ENCODE measurements at regions of chrX and their contacts with region 1.

Region 1: GRCh38 chrX:54999717-55000598 is at the start of gene APEX2:
- DNase-seq: peak; percentile 66 to 89 (median 85)
- ATAC-seq: peak; percentile 97
- H3K4me3 ChIP-seq: peak within 1 kb of the TSS; percentile 95
- H3K4me3 Mint-ChIP-seq: peak within 1 kb of the TSS; percentile 90 to 97 (median 94)
- H3K27ac ChIP-seq: peak within 1 kb of the TSS; percentile 90
- H3K27ac Mint-ChIP-seq: peak within 1 kb of the TSS; percentile 94 to 99 (median 96)
- H3K4me1 ChIP-seq: peaks cover 9 to 17% of the 10 kb centered on the region in 2 donors
- H3K4me1 Mint-ChIP-seq: peaks cover 8 to 35% (median 26%) of the 10 kb centered on the region in 7 donors
- H3K27me3 ChIP-seq: no peaks in the 10 kb centered on the region
- H3K27me3 Mint-ChIP-seq: no peaks in the 10 kb centered on the region
- total RNA-seq, gene APEX2: 6.5 to 24.6 (median 12.2) TPM

Region 2: DNA sequence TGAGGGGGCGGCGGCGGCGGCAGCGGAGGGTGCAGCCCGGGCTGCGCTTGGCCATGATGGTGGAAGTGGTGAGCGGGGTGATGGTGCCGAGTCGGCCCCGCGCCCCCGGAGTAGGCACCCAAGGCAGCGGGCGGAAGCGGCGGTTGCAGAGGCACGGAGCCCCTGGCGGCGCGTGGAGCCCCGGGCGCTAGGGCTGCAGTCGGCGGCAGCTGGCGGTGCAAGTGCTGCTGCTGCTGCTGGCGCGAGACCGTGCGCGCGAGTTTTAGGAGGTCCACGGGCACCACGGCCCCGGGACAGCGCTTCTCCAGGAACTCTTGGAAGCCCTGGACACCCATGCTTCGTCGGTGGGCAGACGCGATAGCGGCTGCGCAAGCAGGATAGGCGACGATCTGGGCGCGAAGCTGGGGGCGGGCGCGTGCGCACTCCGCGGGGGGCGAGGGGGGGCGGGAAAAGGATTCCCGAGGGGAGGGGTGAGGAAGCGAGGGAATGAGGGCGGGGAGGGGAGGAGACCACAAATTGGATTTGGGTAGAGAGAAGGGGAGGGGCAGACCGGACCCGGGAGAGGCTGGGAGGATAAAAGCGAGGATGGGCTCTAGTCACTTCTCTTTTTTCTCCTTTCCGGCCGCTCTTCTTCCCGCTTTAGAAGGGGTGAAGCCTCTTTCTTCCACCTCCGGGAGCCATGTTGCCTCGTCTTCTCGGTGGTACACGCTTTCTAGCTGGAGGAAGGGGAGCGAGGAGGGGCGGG is 816.9 kb before region 1 on chrX and contains the start of gene FAM120C:
- CTCF ChIA-PET with region 1: no interaction called
- POLR2A ChIA-PET with region 1: no interaction called
- intact Hi-C with region 1: loop called (anchors 1 kb)
- DNase-seq: peak; percentile 23 to 70 (median 65)
- ATAC-seq: peak; percentile 79
- H3K4me3 ChIP-seq: peak within 1 kb of the TSS; percentile 62
- H3K4me3 Mint-ChIP-seq: peak within 1 kb of the TSS; percentile 70 to 92 (median 88)
- H3K27ac ChIP-seq: peak within 1 kb of the TSS; percentile 78
- H3K27ac Mint-ChIP-seq: peak within 1 kb of the TSS; percentile 81 to 91 (median 88)
- H3K4me1 ChIP-seq: peaks cover 22 to 27% of the 10 kb centered on the region in 2 donors
- H3K4me1 Mint-ChIP-seq: peaks cover 30 to 42% (median 39%) of the 10 kb centered on the region in 7 donors
- H3K27me3 ChIP-seq: no peaks in the 10 kb centered on the region
- H3K27me3 Mint-ChIP-seq: no peaks in the 10 kb centered on the region
- total RNA-seq, gene FAM120C: 13.5 to 24.7 (median 17.6) TPM

Region 3: GRCh38 chrX:54529552-54530357 is 470.2 kb before region 1 on chrX and contains the start of gene GNL3L:
- CTCF ChIA-PET with region 1: no interaction called
- POLR2A ChIA-PET with region 1: no interaction called
- intact Hi-C with region 1: loop called (anchors 1 kb)
- DNase-seq: peak; percentile 58 to 84 (median 76)
- ATAC-seq: peak; percentile 93
- H3K4me3 ChIP-seq: peak within 1 kb of the TSS; percentile 82
- H3K4me3 Mint-ChIP-seq: peak within 1 kb of the TSS; percentile 87 to 97 (median 94)
- H3K27ac ChIP-seq: peak within 1 kb of the TSS; percentile 82
- H3K27ac Mint-ChIP-seq: peak within 1 kb of the TSS; percentile 87 to 99 (median 93)
- H3K4me1 ChIP-seq: peaks cover 17 to 30% of the 10 kb centered on the region in 2 donors
- H3K4me1 Mint-ChIP-seq: peaks cover 10 to 46% (median 32%) of the 10 kb centered on the region in 7 donors
- H3K27me3 ChIP-seq: no peaks in the 10 kb centered on the region
- H3K27me3 Mint-ChIP-seq: no peaks in the 10 kb centered on the region
- total RNA-seq, gene GNL3L: 32.8 to 55.4 (median 41.8) TPM

Region 4: GRCh38 chrX:54891573-54891972 is 108.4 kb before region 1 on chrX:
- CTCF ChIA-PET with region 1: interaction called, 10 read pairs
- POLR2A ChIA-PET with region 1: interaction called, 4 read pairs
- intact Hi-C with region 1: no loop called
- DNase-seq: peak in 7 of 9 donors; percentile 11 to 54 (median 40)
- ATAC-seq: peak; percentile 60
- H3K4me3 ChIP-seq: no peak overlapping the region
- H3K4me3 Mint-ChIP-seq: no peak overlapping the region
- H3K27ac ChIP-seq: no peak overlapping the region
- H3K27ac Mint-ChIP-seq: no peak overlapping the region
- H3K4me1 ChIP-seq: no peaks in the 10 kb centered on the region
- H3K4me1 Mint-ChIP-seq: peaks cover 0 to 1% (median 0%) of the 10 kb centered on the region in 7 donors
- H3K27me3 ChIP-seq: no peaks in the 10 kb centered on the region
- H3K27me3 Mint-ChIP-seq: peaks cover 0 to 9% (median 4%) of the 10 kb centered on the region in 5 donors

Region 5: DNA sequence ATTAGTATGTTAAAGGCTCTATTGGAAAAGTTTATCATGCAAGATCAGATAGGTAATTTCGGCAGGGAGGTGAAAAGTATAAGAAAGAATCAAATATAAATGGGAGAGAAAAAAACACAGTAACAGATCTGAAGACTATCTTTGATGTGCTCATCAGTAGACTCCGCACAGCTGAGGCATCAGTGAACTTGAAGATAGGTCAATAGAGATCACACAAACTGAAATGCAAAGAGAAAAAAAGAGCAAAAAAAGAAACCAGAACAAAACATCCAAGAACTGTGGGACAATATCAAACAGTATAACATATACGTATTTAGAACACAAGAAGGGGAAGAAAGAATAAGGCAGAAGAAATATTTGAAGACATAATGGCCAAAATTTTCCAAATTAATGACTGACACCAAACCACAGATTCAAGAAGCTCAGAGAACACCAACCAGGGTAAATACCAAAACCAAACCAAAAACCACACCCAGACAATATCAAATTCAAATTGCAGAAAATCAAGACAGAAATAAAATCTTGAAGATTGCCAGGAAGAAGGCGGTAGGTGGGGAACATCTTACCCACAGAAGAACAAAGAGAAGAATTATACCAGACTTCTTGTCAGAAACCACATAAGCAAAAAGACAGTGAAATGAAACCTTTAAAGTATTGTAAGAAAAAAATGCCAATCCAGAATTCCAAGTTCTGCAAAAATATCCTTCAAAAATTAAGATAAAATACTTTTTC is 35.0 kb before region 1 on chrX:
- CTCF ChIA-PET with region 1: no interaction called
- POLR2A ChIA-PET with region 1: interaction called, 3 read pairs
- intact Hi-C with region 1: loop called in 1 of 2 experiments (anchors 1 kb)
- DNase-seq: peak in 7 of 9 donors; percentile 9 to 67 (median 54)
- ATAC-seq: peak; percentile 70
- H3K4me3 ChIP-seq: no peak overlapping the region
- H3K4me3 Mint-ChIP-seq: peak overlapping the region in 9 of 10 donors; percentile 12 to 83 (median 55)
- H3K27ac ChIP-seq: no peak overlapping the region
- H3K27ac Mint-ChIP-seq: peak overlapping the region in 7 of 9 donors; percentile 61 to 90 (median 79)
- H3K4me1 ChIP-seq: peaks cover 0 to 20% of the 10 kb centered on the region in 2 donors
- H3K4me1 Mint-ChIP-seq: peaks cover 6 to 60% (median 46%) of the 10 kb centered on the region in 7 donors
- H3K27me3 ChIP-seq: no peaks in the 10 kb centered on the region
- H3K27me3 Mint-ChIP-seq: peaks cover 0 to 3% (median 0%) of the 10 kb centered on the region in 5 donors

Region 6: GRCh38 chrX:55342533-55343501 is 342.9 kb after region 1 on chrX:
- CTCF ChIA-PET with region 1: no interaction called
- POLR2A ChIA-PET with region 1: no interaction called
- intact Hi-C with region 1: loop called in 1 of 2 experiments (anchors 2 kb)
- DNase-seq: peak in 8 of 9 donors; percentile 21 to 72 (median 52)
- ATAC-seq: peak; percentile 80
- H3K4me3 ChIP-seq: no peak overlapping the region
- H3K4me3 Mint-ChIP-seq: peak overlapping the region in 9 of 10 donors; percentile 0 to 65 (median 22)
- H3K27ac ChIP-seq: no peak overlapping the region
- H3K27ac Mint-ChIP-seq: peak overlapping the region in 5 of 9 donors; percentile 19 to 35 (median 24)
- H3K4me1 ChIP-seq: peaks cover 0 to 7% of the 10 kb centered on the region in 2 donors
- H3K4me1 Mint-ChIP-seq: peaks cover 10 to 26% (median 21%) of the 10 kb centered on the region in 7 donors
- H3K27me3 ChIP-seq: no peaks in the 10 kb centered on the region
- H3K27me3 Mint-ChIP-seq: peaks cover 0 to 9% (median 0%) of the 10 kb centered on the region in 5 donors

Region 7: GRCh38 chrX:56618323-56618722 is 1618.4 kb after region 1 on chrX:
- CTCF ChIA-PET with region 1: no interaction called
- POLR2A ChIA-PET with region 1: no interaction called
- intact Hi-C with region 1: no loop called
- DNase-seq: no peak
- ATAC-seq: no peak
- H3K4me3 ChIP-seq: no peak overlapping the region
- H3K4me3 Mint-ChIP-seq: no peak overlapping the region
- H3K27ac ChIP-seq: no peak overlapping the region
- H3K27ac Mint-ChIP-seq: peak overlapping the region in 1 of 9 donors; percentile 48
- H3K4me1 ChIP-seq: no peaks in the 10 kb centered on the region
- H3K4me1 Mint-ChIP-seq: peaks cover 0 to 19% (median 10%) of the 10 kb centered on the region in 7 donors
- H3K27me3 ChIP-seq: no peaks in the 10 kb centered on the region
- H3K27me3 Mint-ChIP-seq: no peaks in the 10 kb centered on the region

Measured in naive thymus-derived CD4-positive, alpha-beta T cell (primary cell).